Right ventricle myocardium inferior (tissue), 1 donor: ENCODE measurements at regions of chr3 and their contacts with region 1.

Region 1: DNA sequence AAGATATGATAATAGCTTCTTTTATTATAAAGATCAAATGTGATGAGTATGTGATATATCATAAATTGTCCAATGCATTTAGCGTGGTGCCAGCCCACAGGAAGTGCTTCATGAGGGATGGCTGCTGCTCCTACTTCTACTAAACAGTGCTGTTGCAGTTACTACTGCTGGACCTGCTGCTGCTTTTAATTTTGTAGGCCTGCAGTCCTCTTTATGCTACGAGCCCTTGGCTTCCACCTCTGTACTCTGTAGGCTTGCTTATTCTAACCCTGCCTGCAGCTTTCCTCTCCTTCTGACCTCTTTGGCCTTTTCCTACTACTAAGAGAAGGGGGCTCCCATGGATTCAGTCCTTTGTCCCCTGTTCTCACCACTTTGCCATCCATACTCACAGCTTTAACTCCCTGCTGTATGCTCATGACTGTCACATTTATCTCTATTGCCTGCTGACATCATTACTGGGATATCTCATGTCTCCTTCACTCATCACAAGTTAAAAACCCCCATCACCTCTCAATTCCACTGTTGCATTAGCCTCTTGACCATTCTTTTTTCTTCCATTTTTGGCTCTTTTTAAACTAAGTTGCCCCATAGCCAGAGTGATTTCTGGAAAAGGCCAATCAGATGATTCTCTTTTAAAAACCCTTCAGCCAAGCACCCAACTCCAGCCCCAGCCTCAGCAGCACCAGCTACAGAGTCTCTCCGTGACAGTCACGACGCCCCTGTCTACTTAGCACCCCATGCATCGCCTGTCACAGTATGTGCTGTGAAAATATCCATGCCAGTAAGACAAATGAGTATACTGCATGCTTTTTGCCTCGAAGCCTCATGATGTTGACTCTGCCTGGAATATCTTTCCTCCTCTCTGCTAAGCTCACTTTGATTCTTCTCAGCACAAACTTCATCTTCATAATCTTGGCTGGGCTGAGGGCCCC is 56.3 kb downstream of the PLCL2 start:
- DNase-seq: no peak
- ATAC-seq: no peak

Region 2: GRCh38 chr3:16906682-16907081 is 34.4 kb before region 1 on chr3:
- intact Hi-C with region 1: loop called (anchors 5 kb)
- DNase-seq: no peak
- ATAC-seq: no peak